ENCODE measurements at regions of chr20 and their contacts with region 1.

Region 1: GRCh38 chr20:34407962-34408474 is 44.9 kb downstream of the ITCH start:
- DNase-seq: no peak
- H3K4me3 Mint-ChIP-seq: no peak overlapping the region
- H3K27ac Mint-ChIP-seq: no peak overlapping the region
- H3K4me1 Mint-ChIP-seq: peaks cover 28% of the 10 kb centered on the region
- H3K27me3 Mint-ChIP-seq: no peaks in the 10 kb centered on the region

Region 2: GRCh38 chr20:34363062-34363464 is 45.0 kb before region 1 on chr20 and contains the start of gene ITCH:
- CTCF ChIA-PET with region 1: no interaction called
- POLR2A ChIA-PET with region 1: interaction called, 3 read pairs
- intact Hi-C with region 1: loop called (anchors 5 kb)
- DNase-seq: peak; percentile 96
- H3K4me3 Mint-ChIP-seq: peak within 1 kb of the TSS; percentile 93
- H3K27ac Mint-ChIP-seq: peak within 1 kb of the TSS; percentile 92
- H3K4me1 Mint-ChIP-seq: peaks cover 28% of the 10 kb centered on the region
- H3K27me3 Mint-ChIP-seq: no peaks in the 10 kb centered on the region
- total RNA-seq, gene ITCH: 42.3 to 45.2 TPM